T-cell (primary cell): ENCODE measurements at regions of chr18 and their contacts with region 1.

Region 1: DNA sequence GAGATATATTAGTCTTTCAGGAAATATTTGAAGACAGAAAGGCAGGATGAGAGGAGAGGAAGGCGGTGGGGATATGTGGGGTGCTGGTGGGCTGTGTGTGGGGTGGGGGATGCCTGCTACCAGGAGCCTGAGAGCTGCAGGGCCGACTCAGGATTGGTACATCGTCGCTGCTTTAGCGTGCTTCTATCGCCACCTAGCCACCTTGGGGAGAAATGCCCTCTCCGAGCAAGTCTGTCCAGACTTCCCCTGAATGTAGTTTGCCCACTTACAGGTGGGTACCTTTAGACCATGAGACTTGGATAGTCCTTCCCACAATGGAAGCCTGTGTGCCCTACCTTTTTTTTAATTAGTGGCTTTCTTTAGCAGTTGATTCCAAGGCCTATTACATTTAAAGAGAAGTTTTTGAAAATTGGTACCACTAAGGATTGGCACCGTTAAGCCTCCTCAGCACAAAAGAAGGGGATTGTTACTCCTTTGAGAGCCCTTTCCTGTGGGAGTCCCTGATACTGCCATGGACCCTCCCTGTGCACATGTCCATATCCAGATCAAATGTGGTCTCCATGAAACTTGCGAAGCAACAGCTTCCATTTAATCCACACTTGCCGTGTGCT is 114.1 kb upstream of the NDUFV2 start:
- DNase-seq: peak; percentile 10 to 75 (median 38)
- ATAC-seq: peak; percentile 61 to 78 (median 74)
- H3K4me3 ChIP-seq: no peak overlapping the region
- H3K4me3 Mint-ChIP-seq: no peak overlapping the region
- H3K27ac ChIP-seq: no peak overlapping the region
- H3K27ac Mint-ChIP-seq: no peak overlapping the region
- H3K4me1 ChIP-seq: no peaks in the 10 kb centered on the region
- H3K4me1 Mint-ChIP-seq: no peaks in the 10 kb centered on the region
- H3K27me3 ChIP-seq: peaks cover 0 to 22% of the 10 kb centered on the region in 2 experiments
- H3K27me3 Mint-ChIP-seq: peaks cover 15 to 17% of the 10 kb centered on the region in 2 donors

Region 2: DNA sequence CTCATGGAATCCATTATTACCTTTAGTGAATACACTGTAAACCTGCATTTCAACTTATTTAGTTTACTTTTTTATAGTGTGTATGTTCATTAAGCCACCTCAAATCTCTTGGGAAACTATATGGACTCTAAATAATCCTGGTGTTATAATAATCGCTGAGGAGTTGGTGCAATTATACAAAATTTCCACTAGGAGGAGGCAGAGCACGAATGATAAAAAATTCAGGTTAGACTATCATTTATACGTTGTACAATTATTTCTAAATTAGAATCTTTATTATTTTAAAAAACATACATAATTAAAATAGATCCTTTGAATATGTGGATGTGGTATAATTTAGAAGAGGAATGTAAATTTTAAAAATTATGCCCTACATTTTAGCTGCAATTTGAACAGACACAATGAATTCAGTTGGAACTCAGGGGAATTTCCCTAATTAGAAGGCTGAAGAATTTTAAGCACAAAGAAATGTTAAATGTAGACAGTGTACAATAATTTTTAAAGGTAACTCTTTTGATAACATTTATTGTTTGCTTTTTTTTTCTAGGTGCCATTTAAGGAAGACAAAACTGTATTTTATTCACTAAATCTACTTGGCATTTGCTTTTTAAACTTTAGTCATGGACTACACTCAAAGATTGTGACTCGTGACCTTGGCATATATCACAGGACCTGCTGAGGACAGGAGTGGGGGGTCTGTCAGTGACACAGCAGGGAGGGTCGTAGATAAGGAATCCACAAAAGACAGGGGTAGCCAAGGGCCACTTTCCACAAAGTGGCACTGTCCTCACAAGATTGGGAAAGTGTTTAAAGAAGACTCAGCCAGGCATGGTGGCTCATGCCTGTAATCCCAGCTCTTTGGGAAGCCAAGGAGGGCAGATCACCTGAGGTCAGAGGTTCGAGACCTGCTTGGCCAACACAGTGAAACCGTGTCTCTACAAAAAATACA is 333.6 kb before region 1 on chr18:
- CTCF ChIA-PET with region 1: interaction called, 6 to 10 read pairs
- POLR2A ChIA-PET with region 1: no interaction called
- DNase-seq: peak in 1 of 35 experiments; percentile 44
- ATAC-seq: peak in 2 of 4 experiments; percentile 35 to 40
- H3K4me3 ChIP-seq: no peak overlapping the region
- H3K4me3 Mint-ChIP-seq: no peak overlapping the region
- H3K27ac ChIP-seq: no peak overlapping the region
- H3K27ac Mint-ChIP-seq: no peak overlapping the region
- H3K4me1 ChIP-seq: no peaks in the 10 kb centered on the region
- H3K4me1 Mint-ChIP-seq: no peaks in the 10 kb centered on the region
- H3K27me3 ChIP-seq: peaks cover 0 to 8% of the 10 kb centered on the region in 2 experiments
- H3K27me3 Mint-ChIP-seq: peaks cover 3 to 21% of the 10 kb centered on the region in 2 donors

Region 3: GRCh38 chr18:8696749-8697211 is 291.6 kb before region 1 on chr18:
- CTCF ChIA-PET with region 1: interaction called, 24 to 43 read pairs
- POLR2A ChIA-PET with region 1: no interaction called
- DNase-seq: peak in 34 of 35 experiments; percentile 33 to 78 (median 64)
- ATAC-seq: peak; percentile 83 to 91 (median 86)
- H3K4me3 ChIP-seq: no peak overlapping the region
- H3K4me3 Mint-ChIP-seq: no peak overlapping the region
- H3K27ac ChIP-seq: no peak overlapping the region
- H3K27ac Mint-ChIP-seq: no peak overlapping the region
- H3K4me1 ChIP-seq: no peaks in the 10 kb centered on the region
- H3K4me1 Mint-ChIP-seq: peaks cover 0 to 1% (median 0%) of the 10 kb centered on the region in 3 donors
- H3K27me3 ChIP-seq: peaks cover 0 to 26% of the 10 kb centered on the region in 2 experiments
- H3K27me3 Mint-ChIP-seq: peaks cover 18 to 19% of the 10 kb centered on the region in 2 donors

Region 4: DNA sequence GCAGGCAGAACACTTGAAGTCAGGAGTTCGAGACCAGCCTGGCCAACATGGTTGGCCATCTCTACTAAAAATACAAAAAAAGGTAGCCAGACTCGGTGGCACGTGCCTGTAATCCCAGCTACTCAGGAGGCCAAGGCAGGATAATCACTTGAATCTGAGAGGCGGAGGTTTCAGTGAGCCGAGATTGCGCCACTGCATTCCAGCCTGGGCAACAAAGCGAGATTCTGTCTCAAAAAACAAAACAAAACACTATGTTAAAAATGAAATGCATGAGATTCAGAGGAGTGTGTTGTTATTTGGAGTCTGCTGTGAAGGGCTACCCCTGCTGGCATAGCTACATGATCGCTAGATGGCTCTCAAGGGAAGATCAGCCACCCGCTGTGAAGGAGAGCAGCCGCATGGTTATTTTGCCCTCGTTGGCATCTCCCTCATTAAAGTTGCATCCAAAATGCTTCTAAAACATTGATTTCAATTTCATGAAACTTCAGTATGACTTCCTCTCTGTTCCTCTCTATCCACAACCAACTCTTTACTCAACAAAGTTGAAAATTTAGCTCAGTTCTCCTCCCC is 59.3 kb after region 1 on chr18:
- CTCF ChIA-PET with region 1: no interaction called
- POLR2A ChIA-PET with region 1: no interaction called
- DNase-seq: no peak
- ATAC-seq: no peak
- H3K4me3 ChIP-seq: no peak overlapping the region
- H3K4me3 Mint-ChIP-seq: no peak overlapping the region
- H3K27ac ChIP-seq: no peak overlapping the region
- H3K27ac Mint-ChIP-seq: no peak overlapping the region
- H3K4me1 ChIP-seq: no peaks in the 10 kb centered on the region
- H3K4me1 Mint-ChIP-seq: peaks cover 0 to 2% (median 0%) of the 10 kb centered on the region in 3 donors
- H3K27me3 ChIP-seq: no peaks in the 10 kb centered on the region
- H3K27me3 Mint-ChIP-seq: no peaks in the 10 kb centered on the region